ENCODE measurements at regions of chr9 and their contacts with region 1.

Region 1: DNA sequence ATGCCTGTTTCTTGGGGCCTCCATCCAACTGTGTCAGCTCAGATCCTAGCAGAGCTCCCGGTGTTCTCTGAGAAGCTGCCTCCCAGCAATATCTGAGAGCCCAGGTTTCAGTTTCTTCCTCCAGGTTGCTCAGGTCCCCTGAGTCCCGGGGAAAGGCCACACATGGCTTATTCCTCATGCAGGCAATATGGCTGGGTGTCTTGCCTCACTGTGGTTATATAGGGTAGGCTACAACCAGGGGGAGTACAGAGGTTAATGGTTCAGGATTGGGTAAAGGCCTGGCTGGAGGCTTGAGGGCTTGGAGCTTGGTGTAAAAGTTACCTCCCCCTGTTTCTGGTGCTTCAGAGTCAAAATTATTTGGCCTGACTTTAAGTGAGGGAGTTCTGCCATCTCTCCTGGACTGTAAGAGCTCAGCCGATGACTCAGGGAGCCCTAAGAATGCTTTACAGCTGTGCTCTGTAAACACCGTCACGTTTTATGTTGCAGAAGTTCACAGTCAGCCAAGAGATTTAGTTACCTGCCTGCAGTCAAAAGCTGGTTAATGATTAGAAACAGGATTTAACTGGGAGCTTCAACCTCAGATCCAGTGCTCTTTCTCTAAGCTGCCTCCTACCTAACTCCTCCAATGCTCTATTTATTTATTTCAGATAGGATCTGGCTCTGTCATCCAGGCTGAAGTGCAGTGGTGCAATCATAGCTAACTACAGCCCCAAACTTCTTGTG is 24.3 kb upstream of the UBAP2 start:
- DNase-seq: no peak
- H3K4me3 ChIP-seq: no peak overlapping the region
- H3K27ac ChIP-seq: 0 out of 4 replicates have a peak overlapping the region, but pooled peaks of 1 of the 2 experiments have one; percentile 7
- H3K4me1 ChIP-seq: no peaks in the 10 kb centered on the region
- H3K27me3 ChIP-seq: no peaks in the 10 kb centered on the region
- CTCF ChIP-seq: no peak
- EP300 ChIP-seq: no peak
- RAD21 ChIP-seq: no peak

Region 2: GRCh38 chr9:33614001-33614687 is 458.9 kb before region 1 on chr9:
- CTCF ChIA-PET with region 1: no interaction called
- POLR2A ChIA-PET with region 1: no interaction called
- DNase-seq: no peak
- H3K4me3 ChIP-seq: no peak overlapping the region
- H3K27ac ChIP-seq: no peak overlapping the region
- H3K4me1 ChIP-seq: no peaks in the 10 kb centered on the region
- H3K27me3 ChIP-seq: no peaks in the 10 kb centered on the region
- CTCF ChIP-seq: no peak
- EP300 ChIP-seq: no peak
- RAD21 ChIP-seq: no peak

Region 3: DNA sequence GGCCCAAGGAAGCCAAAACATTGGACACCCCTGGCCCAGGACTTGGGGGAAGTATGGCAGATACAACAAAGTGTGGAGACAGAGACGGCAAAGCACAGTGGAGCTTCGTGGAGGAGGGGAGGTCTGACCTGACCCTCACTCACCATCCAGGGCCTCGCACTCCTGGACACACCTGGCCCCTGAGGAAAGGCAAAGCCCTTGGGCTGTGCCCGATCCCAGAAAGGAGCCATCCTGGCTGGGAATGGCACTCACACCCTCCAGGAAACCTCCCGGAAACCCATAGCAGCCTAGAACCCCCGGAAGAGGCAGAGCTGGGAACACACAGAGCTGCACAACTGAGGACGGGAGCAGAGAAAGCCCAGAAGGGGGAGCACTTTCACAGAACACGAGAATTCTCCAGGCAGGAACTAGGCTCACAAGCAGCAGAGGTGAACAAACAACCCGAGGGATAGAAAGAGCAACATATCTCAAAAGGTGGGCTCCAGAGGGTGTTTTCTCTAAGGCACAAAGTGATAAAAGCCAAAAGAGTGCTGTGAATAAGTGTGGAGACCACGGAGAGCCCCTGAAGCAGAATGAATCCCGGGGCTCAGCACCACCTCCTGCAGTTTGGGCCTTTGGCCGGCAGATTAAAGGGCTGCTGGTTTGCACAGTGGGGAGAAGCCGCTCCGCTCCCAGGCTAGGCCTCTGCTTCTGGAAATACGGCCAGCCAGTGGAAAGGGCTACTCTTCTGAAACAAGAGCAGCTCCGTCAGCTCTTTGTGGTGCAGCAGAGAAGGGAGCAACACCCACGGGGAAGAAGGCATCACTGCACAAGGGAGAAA is 147.8 kb before region 1 on chr9:
- CTCF ChIA-PET with region 1: interaction called, 32 read pairs
- POLR2A ChIA-PET with region 1: no interaction called
- DNase-seq: peak; percentile 70
- H3K4me3 ChIP-seq: no peak overlapping the region; a peak in 1 of 4 replicates
- H3K27ac ChIP-seq: no peak overlapping the region; a peak in 1 of 4 replicates
- H3K4me1 ChIP-seq: no peaks in the 10 kb centered on the region; a peak in 1 of 4 replicates
- H3K27me3 ChIP-seq: no peaks in the 10 kb centered on the region
- CTCF ChIP-seq: peak; percentile 74
- EP300 ChIP-seq: no peak
- RAD21 ChIP-seq: peak; percentile 61

Region 4: GRCh38 chr9:34059281-34059680 is 13.7 kb before region 1 on chr9:
- CTCF ChIA-PET with region 1: interaction called, 13 read pairs
- POLR2A ChIA-PET with region 1: no interaction called
- DNase-seq: no peak
- H3K4me3 ChIP-seq: no peak overlapping the region
- H3K27ac ChIP-seq: no peak overlapping the region
- H3K4me1 ChIP-seq: no peaks in the 10 kb centered on the region
- H3K27me3 ChIP-seq: no peaks in the 10 kb centered on the region
- CTCF ChIP-seq: no peak
- EP300 ChIP-seq: no peak
- RAD21 ChIP-seq: no peak

Region 5: DNA sequence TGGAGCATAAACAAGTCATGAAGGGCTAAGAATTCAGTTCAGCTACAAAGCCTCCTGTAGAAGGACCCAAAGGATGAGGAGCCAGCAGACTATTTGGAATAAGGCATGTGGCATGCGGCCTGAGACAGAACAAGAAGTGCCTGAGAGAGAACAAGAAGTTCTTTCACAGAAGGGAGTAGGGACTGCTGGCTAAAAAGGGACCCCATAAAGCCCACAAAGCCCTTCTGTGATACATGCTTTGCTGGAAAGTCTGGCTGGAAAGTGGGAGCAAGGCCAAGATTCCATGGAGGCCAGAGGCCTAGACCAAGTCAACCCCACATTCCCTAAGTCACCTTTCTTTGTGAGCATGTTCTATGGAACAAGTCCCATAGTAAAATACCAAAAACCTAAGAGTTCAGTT is 11.5 kb after region 1 on chr9:
- CTCF ChIA-PET with region 1: interaction called, 12 read pairs
- POLR2A ChIA-PET with region 1: no interaction called
- DNase-seq: no peak
- H3K4me3 ChIP-seq: no peak overlapping the region
- H3K27ac ChIP-seq: no peak overlapping the region
- H3K4me1 ChIP-seq: no peaks in the 10 kb centered on the region
- H3K27me3 ChIP-seq: no peaks in the 10 kb centered on the region
- CTCF ChIP-seq: no peak
- EP300 ChIP-seq: no peak
- RAD21 ChIP-seq: no peak

Measured in SK-N-SH (cell line).